ENCODE measurements at regions of chr12 and their contacts with region 1.

Region 1: GRCh38 chr12:66717036-66717673 is 38.3 kb upstream of the GRIP1 start:
- DNase-seq: no peak
- ATAC-seq: no peak
- H3K4me3 Mint-ChIP-seq: no peak overlapping the region
- H3K27ac Mint-ChIP-seq: no peak overlapping the region
- H3K4me1 Mint-ChIP-seq: peaks cover 17% of the 10 kb centered on the region
- H3K27me3 Mint-ChIP-seq: peaks cover 5% of the 10 kb centered on the region

Region 2: DNA sequence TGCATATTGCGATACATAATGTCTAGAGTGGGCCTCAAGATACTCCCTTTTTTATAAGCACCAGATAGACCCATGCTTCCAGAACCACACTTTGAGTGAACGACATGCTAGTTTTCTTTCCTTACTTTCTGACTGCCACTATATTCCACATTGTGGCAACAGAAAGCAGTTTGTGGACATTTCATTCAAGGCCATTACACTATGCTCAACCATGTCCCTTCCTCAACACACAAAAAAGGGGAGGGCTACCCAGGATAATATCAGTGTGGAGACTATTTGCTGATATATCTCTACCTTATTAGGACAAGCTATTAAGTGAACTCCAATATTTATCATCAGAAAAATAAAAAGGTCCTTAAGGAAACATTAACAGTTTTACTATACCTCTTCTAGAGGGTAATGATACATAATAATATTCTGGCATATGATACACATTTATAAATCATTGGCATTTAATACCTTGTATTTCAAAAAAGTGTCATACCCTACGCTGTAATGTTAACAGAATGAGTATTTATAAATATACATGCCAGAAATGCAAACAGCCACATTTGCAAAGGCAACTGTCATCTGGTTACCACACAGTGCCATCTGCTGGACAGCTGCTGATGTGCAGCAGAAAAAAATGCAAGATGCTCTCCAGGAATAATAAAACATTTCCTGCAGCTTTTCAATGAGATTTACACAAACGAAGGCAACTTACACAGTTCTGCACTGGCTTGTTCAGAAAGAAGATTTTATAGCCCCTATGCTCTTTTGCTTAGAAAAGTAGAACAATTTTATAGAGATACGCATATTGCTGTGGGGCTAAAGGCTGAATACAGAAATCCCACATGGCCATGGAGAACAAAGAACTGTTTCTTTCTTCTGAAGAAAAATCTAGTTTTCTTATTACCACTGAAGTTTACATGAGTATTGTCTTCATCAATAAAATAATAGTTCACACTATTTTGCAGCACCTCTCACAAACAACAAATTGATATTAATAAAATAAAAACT is 143.9 kb after region 1 on chr12:
- CTCF ChIA-PET with region 1: interaction called, 21 read pairs
- DNase-seq: peak; percentile 78
- ATAC-seq: no peak
- H3K4me3 Mint-ChIP-seq: no peak overlapping the region
- H3K27ac Mint-ChIP-seq: no peak overlapping the region
- H3K4me1 Mint-ChIP-seq: peaks cover 13% of the 10 kb centered on the region
- H3K27me3 Mint-ChIP-seq: peaks cover 23% of the 10 kb centered on the region

Measured in activated CD8-positive, alpha-beta memory T cell treated with anti-CD3 and anti-CD28 coated beads, Interleukin-2, amount 10 ng/mL, durations not matched to agents 7 days and 5 days (primary cell).